BJ (cell line): ENCODE measurements at regions of chr2 and their contacts with region 1.

Region 1: GRCh38 chr2:111116843-111117597 is 3.7 kb upstream of the BCL2L11 start:
- DNase-seq: no peak
- H3K4me3 ChIP-seq: peak overlapping the region; percentile 33
- H3K27me3 ChIP-seq: peaks cover 21% of the 10 kb centered on the region
- CTCF ChIP-seq: peak; percentile 97

Region 2: DNA sequence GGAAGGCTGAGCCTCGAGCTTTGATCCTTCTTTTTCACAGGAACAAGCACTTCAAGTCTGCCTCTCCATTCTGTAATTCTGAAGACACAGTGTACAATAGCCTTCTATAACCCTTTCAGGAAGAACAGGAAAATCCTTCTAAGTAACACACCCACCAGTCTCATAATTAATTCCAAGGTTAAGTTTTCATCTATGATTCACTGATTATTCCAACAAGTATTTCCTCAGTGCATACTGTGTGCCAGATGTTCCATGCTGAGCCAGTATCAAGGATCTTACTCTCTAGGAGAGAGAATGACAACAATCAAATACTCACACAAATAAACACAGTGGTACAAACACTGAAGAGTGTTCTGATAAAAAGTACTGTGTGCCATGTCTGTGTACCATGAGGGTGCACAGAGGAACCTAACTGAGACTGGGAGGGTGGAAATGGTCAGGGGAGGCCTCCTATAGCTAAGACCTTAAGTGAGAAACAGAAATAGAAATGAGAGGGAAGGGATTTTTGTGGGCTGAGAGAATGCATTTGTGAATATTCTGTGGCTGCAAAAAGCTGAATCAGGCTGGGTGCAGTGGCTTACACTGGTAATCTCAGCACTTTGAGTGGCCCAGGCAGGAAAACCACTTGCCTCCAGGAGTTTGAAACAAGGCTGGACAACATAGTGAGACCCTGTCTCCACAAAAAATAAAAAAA is 897.4 kb before region 1 on chr2:
- CTCF ChIA-PET with region 1: no interaction called
- POLR2A ChIA-PET with region 1: no interaction called
- DNase-seq: no peak
- H3K4me3 ChIP-seq: no peak overlapping the region
- H3K27me3 ChIP-seq: peaks cover 10% of the 10 kb centered on the region
- CTCF ChIP-seq: no peak

Region 3: GRCh38 chr2:111178730-111179405 is 61.8 kb after region 1 on chr2:
- CTCF ChIA-PET with region 1: no interaction called
- POLR2A ChIA-PET with region 1: no interaction called
- DNase-seq: no peak
- H3K4me3 ChIP-seq: no peak overlapping the region
- H3K27me3 ChIP-seq: peaks cover 6% of the 10 kb centered on the region; the same call in 1 of the 2 replicates
- CTCF ChIP-seq: no peak

Region 4: GRCh38 chr2:111667542-111668273 is 550.7 kb after region 1 on chr2:
- CTCF ChIA-PET with region 1: interaction called, 12 read pairs
- POLR2A ChIA-PET with region 1: no interaction called
- DNase-seq: no peak
- H3K4me3 ChIP-seq: no peak overlapping the region
- H3K27me3 ChIP-seq: no peaks in the 10 kb centered on the region
- CTCF ChIP-seq: peak; percentile 67

Region 5: DNA sequence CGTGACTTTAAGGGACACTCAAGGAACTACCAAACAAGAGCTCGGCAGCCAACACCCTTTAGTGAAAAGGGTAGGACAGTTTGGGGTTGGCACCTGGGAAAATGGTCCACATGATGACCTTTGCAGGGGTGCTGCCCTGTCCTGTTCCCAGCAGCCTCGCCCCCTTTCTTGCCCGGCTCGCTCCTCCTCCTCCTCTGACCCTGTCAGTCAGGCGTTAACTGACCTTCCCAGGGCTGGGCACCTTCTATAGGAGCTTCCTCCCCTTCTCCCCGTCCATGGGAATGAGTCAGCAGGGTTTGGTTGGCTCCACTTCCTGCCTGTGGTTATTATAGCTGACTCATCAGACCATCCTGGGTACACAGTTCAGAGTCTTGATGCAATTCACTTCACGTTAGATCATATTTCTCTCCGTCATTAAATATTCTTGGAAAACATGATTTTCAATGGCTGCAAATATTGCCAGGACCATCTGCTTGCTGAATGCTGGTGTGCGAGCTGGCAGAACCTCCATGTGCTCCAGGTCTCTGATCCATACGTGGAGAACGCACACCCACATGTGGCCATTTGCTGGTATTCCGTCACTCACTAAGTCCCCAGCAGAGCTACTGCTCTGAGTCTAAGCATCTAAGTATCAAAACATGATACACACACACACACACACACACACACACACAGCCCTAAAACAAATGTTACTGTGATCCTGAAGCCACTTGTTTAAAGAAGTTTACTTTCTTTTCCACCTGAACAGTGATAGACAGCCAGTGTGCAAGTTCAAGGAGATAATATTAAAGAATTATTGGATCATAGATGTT is 581.9 kb after region 1 on chr2:
- CTCF ChIA-PET with region 1: interaction called, 10 read pairs
- POLR2A ChIA-PET with region 1: no interaction called
- DNase-seq: peak; percentile 90
- H3K4me3 ChIP-seq: no peak overlapping the region
- H3K27me3 ChIP-seq: no peaks in the 10 kb centered on the region
- CTCF ChIP-seq: peak; percentile 47

Region 6: GRCh38 chr2:111905990-111906735 is 789.1 kb after region 1 on chr2:
- CTCF ChIA-PET with region 1: no interaction called
- POLR2A ChIA-PET with region 1: no interaction called
- DNase-seq: no peak
- H3K4me3 ChIP-seq: no peak overlapping the region
- H3K27me3 ChIP-seq: peaks cover 20% of the 10 kb centered on the region
- CTCF ChIP-seq: no peak